Common myeloid progenitor, CD34-positive (primary cell): ENCODE measurements at regions of chr9 and their contacts with region 1.

Region 1: DNA sequence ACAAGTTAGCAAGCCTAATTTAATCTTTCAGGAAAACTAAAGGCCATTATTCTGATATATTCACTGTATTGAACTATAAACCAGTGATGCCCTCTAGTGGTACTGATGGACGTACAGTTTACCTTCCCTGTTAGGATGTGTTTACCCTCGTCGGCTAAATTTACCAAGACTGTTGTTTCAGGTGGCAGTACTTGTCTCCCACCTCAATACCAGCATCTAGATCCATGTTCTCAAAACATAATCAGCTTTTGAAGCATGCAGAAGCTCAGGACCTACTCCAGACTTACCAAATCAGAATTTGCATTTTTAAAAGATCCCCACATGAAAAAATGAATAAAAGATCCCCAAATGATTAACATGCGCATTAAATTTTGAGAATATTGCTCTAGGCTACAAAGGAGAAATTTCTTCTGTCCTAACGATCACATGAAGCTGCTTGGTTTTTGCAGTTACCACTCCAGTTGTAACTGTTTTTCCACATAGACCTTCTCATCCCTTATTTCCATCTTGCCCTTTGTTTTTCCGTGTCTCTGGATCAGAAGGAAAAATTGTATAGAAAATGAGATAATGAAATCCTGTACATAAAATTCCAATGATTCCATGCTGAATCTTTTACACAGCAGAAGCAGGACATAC is 3.2 kb upstream of the BAAT start:
- DNase-seq: peak; percentile 43 to 52 (median 51)
- H3K4me3 ChIP-seq: no peak overlapping the region
- H3K27ac ChIP-seq: no peak overlapping the region
- H3K4me1 ChIP-seq: no peaks in the 10 kb centered on the region
- H3K27me3 ChIP-seq: no peaks in the 10 kb centered on the region

Region 2: GRCh38 chr9:101398068-101398929 is 10.3 kb after region 1 on chr9 and contains the starts of genes MRPL50 and ZNF189:
- CTCF ChIA-PET with region 1: interaction called, 10 read pairs
- POLR2A ChIA-PET with region 1: no interaction called
- DNase-seq: peak; percentile 99 to 100 (median 99)
- H3K4me3 ChIP-seq: peak within 1 kb of the TSS; percentile 57 to 100 (median 91)
- H3K27ac ChIP-seq: peak within 1 kb of the TSS; percentile 96 to 98
- H3K4me1 ChIP-seq: peaks cover 9 to 29% (median 15%) of the 10 kb centered on the region in 4 experiments
- H3K27me3 ChIP-seq: no peaks in the 10 kb centered on the region